MCF 10A (cell line): ENCODE measurements at regions of chr21 and their contacts with region 1.

Region 1: GRCh38 chr21:33491373-33492102 is at the start of gene DNAJC28:
- DNase-seq: peak; percentile 89
- H3K4me3 Mint-ChIP-seq: peak within 1 kb of the TSS; percentile 96
- H3K27ac Mint-ChIP-seq: peak within 1 kb of the TSS; percentile 87
- H3K4me1 Mint-ChIP-seq: peaks cover 7% of the 10 kb centered on the region
- H3K27me3 Mint-ChIP-seq: no peaks in the 10 kb centered on the region
- CTCF ChIP-seq: no peak
- total RNA-seq, gene DNAJC28: 0.28 and 0.39 TPM in 2 replicates

Region 2: DNA sequence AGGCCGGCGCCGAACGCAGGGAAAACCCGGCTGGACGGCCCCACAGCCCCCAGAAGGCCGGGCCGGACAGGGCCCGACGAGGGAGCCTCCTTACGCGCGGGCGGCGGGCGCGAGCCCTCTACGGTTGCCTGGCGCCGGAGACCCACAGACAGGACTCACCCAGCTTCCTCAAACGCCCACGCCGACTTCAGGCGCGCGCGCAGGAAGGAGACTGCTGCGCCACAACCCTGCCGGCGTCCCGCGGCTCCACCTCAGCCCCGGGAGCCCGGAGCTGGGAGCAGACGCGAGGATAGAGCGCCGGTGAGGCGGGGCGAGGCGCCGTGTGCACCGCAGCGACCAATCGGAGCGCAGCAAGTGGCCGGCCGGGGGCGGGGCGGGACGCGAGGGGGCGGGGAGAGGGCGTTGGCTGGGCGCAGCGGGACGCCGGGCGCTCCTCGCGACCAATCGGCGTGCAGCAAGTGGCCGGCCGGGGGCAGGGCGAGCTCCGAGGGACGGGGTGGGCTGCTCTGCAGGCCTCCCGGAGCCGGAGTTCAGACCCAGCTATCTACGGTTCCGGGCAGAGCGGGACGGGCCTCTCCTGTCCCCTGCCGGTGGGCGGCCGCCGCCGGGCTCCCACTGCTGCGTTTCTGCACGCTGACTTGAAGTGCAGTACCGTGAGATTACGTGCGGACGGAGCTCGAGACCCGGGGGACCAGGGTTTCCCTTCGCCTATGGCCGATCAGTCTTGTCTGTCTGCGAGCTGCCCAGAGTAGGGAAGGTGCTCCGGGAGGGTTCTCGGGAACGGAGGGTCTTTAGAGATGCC is 11.7 kb before region 1 on chr21 and contains the start of gene TMEM50B:
- CTCF ChIA-PET with region 1: interaction called, 11 read pairs
- POLR2A ChIA-PET with region 1: interaction called, 92 read pairs
- intact Hi-C with region 1: no loop called
- DNase-seq: peak; percentile 95
- H3K4me3 Mint-ChIP-seq: peak within 1 kb of the TSS; percentile 87
- H3K27ac Mint-ChIP-seq: peak within 1 kb of the TSS; percentile 74
- H3K4me1 Mint-ChIP-seq: peaks cover 5% of the 10 kb centered on the region
- H3K27me3 Mint-ChIP-seq: no peaks in the 10 kb centered on the region
- CTCF ChIP-seq: peak; percentile 30
- total RNA-seq, gene TMEM50B: 20.7 and 27.8 TPM in 2 replicates